OCI-LY7 (cell line): ENCODE measurements at regions of chr21 and their contacts with region 1.

Region 1: GRCh38 chr21:22374218-22374969 is 1376.2 kb downstream of the NCAM2 start:
- DNase-seq: no peak
- H3K4me3 ChIP-seq: no peak overlapping the region
- H3K27ac ChIP-seq: no peak overlapping the region
- H3K4me1 ChIP-seq: no peaks in the 10 kb centered on the region
- CTCF ChIP-seq: no peak

Region 2: GRCh38 chr21:22319435-22319834 is 55.0 kb before region 1 on chr21:
- CTCF ChIA-PET with region 1: no interaction called
- POLR2A ChIA-PET with region 1: interaction called, 3 read pairs
- intact Hi-C with region 1: loop called (anchors 10 kb)
- DNase-seq: no peak
- H3K4me3 ChIP-seq: no peak overlapping the region
- H3K27ac ChIP-seq: no peak overlapping the region
- H3K4me1 ChIP-seq: no peaks in the 10 kb centered on the region
- CTCF ChIP-seq: no peak

Region 3: GRCh38 chr21:22438428-22439086 is 64.2 kb after region 1 on chr21:
- CTCF ChIA-PET with region 1: no interaction called
- POLR2A ChIA-PET with region 1: no interaction called
- intact Hi-C with region 1: no loop called
- DNase-seq: no peak
- H3K4me3 ChIP-seq: no peak overlapping the region
- H3K27ac ChIP-seq: no peak overlapping the region
- H3K4me1 ChIP-seq: no peaks in the 10 kb centered on the region
- CTCF ChIP-seq: no peak